PC-3 (cell line): ENCODE measurements at regions of chr12 and their contacts with region 1.

Region 1: GRCh38 chr12:47270782-47271664 is 191.3 kb upstream of the AMIGO2 start:
- DNase-seq: peak; percentile 98
- ATAC-seq: peak; percentile 98
- H3K4me3 ChIP-seq: no peak overlapping the region
- H3K27ac ChIP-seq: peak overlapping the region; percentile 97
- H3K4me1 ChIP-seq: peaks cover 67% of the 10 kb centered on the region
- H3K27me3 ChIP-seq: no peaks in the 10 kb centered on the region
- CTCF ChIP-seq: no peak

Region 2: GRCh38 chr12:46944088-46944487 is 326.9 kb before region 1 on chr12:
- CTCF ChIA-PET with region 1: no interaction called
- POLR2A ChIA-PET with region 1: no interaction called
- intact Hi-C with region 1: no loop called
- DNase-seq: peak; percentile 64
- ATAC-seq: no peak
- H3K4me3 ChIP-seq: no peak overlapping the region
- H3K27ac ChIP-seq: no peak overlapping the region
- H3K4me1 ChIP-seq: peaks cover 50% of the 10 kb centered on the region
- H3K27me3 ChIP-seq: no peaks in the 10 kb centered on the region
- CTCF ChIP-seq: peak; percentile 47

Region 3: GRCh38 chr12:47095446-47096236 is 175.4 kb before region 1 on chr12:
- CTCF ChIA-PET with region 1: no interaction called
- POLR2A ChIA-PET with region 1: no interaction called
- intact Hi-C with region 1: loop called (anchors 2 kb)
- DNase-seq: peak; percentile 92
- ATAC-seq: peak; percentile 87
- H3K4me3 ChIP-seq: peak overlapping the region; percentile 36
- H3K27ac ChIP-seq: peak overlapping the region; percentile 61
- H3K4me1 ChIP-seq: peaks cover 54% of the 10 kb centered on the region
- H3K27me3 ChIP-seq: no peaks in the 10 kb centered on the region
- CTCF ChIP-seq: no peak

Region 4: DNA sequence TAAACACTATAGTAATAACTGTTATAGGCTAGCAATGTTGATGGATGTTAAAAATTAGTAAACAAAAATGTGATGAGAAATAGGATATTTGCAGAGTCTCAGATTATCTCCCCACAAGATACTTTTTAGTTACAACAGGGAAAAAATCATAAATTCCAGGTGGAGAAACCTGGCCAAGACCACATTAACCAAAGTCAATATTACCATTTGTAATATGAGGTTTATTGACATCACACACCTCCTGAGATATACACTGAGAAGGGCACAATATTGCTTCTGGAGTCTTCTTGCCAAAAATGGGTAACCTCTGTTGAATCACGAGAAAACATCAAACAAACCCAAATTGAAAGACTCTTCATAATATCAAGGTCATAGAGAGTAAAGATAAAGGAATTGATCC is 118.9 kb before region 1 on chr12:
- CTCF ChIA-PET with region 1: no interaction called
- POLR2A ChIA-PET with region 1: no interaction called
- intact Hi-C with region 1: loop called (anchors 1 kb)
- DNase-seq: peak; percentile 54
- ATAC-seq: peak; percentile 70
- H3K4me3 ChIP-seq: no peak overlapping the region
- H3K27ac ChIP-seq: no peak overlapping the region
- H3K4me1 ChIP-seq: peaks cover 10% of the 10 kb centered on the region
- H3K27me3 ChIP-seq: no peaks in the 10 kb centered on the region
- CTCF ChIP-seq: no peak

Region 5: GRCh38 chr12:47216150-47216677 is 54.8 kb before region 1 on chr12:
- CTCF ChIA-PET with region 1: no interaction called
- POLR2A ChIA-PET with region 1: interaction called, 15 read pairs
- intact Hi-C with region 1: loop called (anchors 1 kb)
- DNase-seq: no peak
- ATAC-seq: no peak
- H3K4me3 ChIP-seq: no peak overlapping the region
- H3K27ac ChIP-seq: no peak overlapping the region; the same call in 1 of the 2 replicates
- H3K4me1 ChIP-seq: peaks cover 44% of the 10 kb centered on the region
- H3K27me3 ChIP-seq: no peaks in the 10 kb centered on the region
- CTCF ChIP-seq: no peak

Region 6: GRCh38 chr12:47236109-47236714 is 34.8 kb before region 1 on chr12:
- CTCF ChIA-PET with region 1: no interaction called
- POLR2A ChIA-PET with region 1: no interaction called
- intact Hi-C with region 1: loop called (anchors 5 kb)
- DNase-seq: peak; percentile 91
- ATAC-seq: peak; percentile 98
- H3K4me3 ChIP-seq: no peak overlapping the region
- H3K27ac ChIP-seq: peak overlapping the region; percentile 84
- H3K4me1 ChIP-seq: peaks cover 23% of the 10 kb centered on the region
- H3K27me3 ChIP-seq: no peaks in the 10 kb centered on the region
- CTCF ChIP-seq: no peak

Region 7: GRCh38 chr12:47307680-47308399 is 36.8 kb after region 1 on chr12:
- CTCF ChIA-PET with region 1: no interaction called
- POLR2A ChIA-PET with region 1: no interaction called
- intact Hi-C with region 1: loop called (anchors 2 kb)
- DNase-seq: peak; percentile 84
- ATAC-seq: peak; percentile 100
- H3K4me3 ChIP-seq: no peak overlapping the region
- H3K27ac ChIP-seq: no peak overlapping the region
- H3K4me1 ChIP-seq: peaks cover 8% of the 10 kb centered on the region; the same call in 1 of the 2 replicates
- H3K27me3 ChIP-seq: no peaks in the 10 kb centered on the region
- CTCF ChIP-seq: peak; percentile 94

Region 8: DNA sequence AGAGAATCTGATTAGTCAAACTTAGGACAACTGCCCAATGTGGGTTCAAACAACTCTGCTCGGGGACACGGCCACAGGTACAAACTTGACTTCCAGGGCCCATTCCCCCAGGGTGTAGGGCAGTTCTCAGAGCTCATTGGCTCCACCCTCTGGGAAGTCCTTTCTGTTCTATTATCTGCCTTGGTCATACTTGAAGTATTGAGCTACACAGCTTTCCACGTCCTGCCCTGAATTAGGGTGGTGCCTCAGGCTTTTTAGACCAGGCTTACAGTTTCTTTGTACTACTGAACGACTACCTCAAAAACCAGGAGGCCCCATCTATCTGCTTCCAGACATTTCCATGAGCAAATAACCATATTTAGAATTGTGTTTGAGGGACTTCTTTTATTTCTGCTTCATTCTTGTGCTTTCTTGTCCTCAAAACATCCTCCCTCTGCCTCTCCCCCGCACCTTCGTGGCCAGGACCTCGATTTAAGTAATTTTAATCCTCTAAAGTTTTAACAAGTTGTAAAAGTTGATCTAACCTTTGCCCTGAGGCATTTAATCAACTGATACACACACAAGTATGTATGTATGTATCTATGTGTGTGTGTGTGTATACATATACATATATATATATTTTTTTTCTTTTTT is 90.5 kb after region 1 on chr12:
- CTCF ChIA-PET with region 1: no interaction called
- POLR2A ChIA-PET with region 1: no interaction called
- intact Hi-C with region 1: no loop called
- DNase-seq: no peak
- ATAC-seq: no peak
- H3K4me3 ChIP-seq: no peak overlapping the region
- H3K27ac ChIP-seq: no peak overlapping the region
- H3K4me1 ChIP-seq: peaks cover 4% of the 10 kb centered on the region; the same call in 1 of the 2 replicates
- H3K27me3 ChIP-seq: no peaks in the 10 kb centered on the region
- CTCF ChIP-seq: no peak; the same call in 1 of the 2 replicates

Region 9: DNA sequence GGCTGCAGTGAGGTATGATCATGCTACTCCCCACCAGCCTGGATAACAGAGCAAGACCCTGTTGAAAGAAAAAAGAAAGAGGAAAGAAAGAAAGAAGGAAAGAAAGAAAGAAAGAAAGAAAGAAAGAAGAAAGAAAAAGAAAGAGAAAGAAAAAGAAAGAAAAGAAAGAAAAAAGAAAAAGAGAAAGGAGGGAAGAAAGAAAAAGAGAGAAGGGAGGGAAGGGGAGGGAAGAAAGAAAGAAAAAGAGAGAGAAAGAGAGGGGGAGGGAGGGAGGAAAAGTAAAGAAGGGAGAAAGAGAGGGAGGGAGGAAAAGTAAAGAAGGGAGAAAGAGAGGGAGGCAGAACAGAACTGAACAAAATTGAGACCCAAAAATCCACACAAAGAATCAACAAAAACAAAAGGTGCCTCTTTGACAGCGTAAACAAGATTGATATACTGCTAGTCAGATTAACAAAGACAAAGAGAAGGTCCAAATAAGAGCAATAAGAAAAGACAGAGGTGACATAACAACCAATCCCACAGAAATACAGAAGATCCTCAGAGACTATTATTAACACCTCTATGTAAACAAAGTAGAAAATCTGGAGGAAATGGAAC is 102.6 kb after region 1 on chr12:
- CTCF ChIA-PET with region 1: no interaction called
- POLR2A ChIA-PET with region 1: no interaction called
- intact Hi-C with region 1: no loop called
- DNase-seq: no peak
- ATAC-seq: no peak
- H3K4me3 ChIP-seq: no peak overlapping the region
- H3K27ac ChIP-seq: no peak overlapping the region
- H3K4me1 ChIP-seq: peaks cover 28% of the 10 kb centered on the region
- H3K27me3 ChIP-seq: no peaks in the 10 kb centered on the region
- CTCF ChIP-seq: no peak

Region 10: GRCh38 chr12:47397664-47398281 is 126.8 kb after region 1 on chr12:
- CTCF ChIA-PET with region 1: no interaction called
- POLR2A ChIA-PET with region 1: no interaction called
- intact Hi-C with region 1: loop called (anchors 2 kb)
- DNase-seq: peak; percentile 94
- ATAC-seq: peak; percentile 88
- H3K4me3 ChIP-seq: no peak overlapping the region
- H3K27ac ChIP-seq: no peak overlapping the region
- H3K4me1 ChIP-seq: peaks cover 25% of the 10 kb centered on the region
- H3K27me3 ChIP-seq: no peaks in the 10 kb centered on the region
- CTCF ChIP-seq: peak; percentile 93

Region 11: DNA sequence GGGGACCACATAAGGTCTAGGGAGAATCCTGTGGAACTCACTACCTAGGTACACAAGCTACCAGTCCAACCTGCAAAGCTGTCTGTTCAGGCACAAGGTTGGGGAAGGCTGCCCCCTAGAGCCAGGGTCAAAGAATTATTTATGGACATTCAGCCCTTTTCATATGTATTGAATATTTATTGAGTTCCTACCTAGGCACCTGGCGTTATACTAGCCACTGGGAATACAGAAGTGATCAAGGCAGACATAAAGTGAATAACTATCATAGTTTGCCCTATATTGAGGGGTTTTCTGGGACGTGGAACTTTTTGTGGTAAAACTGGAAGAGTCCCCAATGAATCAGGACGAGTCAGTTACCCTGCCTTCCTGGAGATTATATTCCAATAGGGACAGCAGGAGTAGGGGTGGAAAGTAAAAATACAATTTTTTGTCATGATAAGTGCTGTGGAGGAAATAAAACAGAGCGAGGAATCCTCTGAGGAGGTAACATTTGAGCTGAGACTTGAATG is 496.2 kb after region 1 on chr12:
- CTCF ChIA-PET with region 1: no interaction called
- POLR2A ChIA-PET with region 1: no interaction called
- intact Hi-C with region 1: no loop called
- DNase-seq: peak; percentile 64
- ATAC-seq: peak; percentile 24; the same call in 1 of the 2 replicates
- H3K4me3 ChIP-seq: no peak overlapping the region
- H3K27ac ChIP-seq: no peak overlapping the region
- H3K4me1 ChIP-seq: peaks cover 13% of the 10 kb centered on the region
- H3K27me3 ChIP-seq: no peaks in the 10 kb centered on the region
- CTCF ChIP-seq: peak; percentile 78